Activated CD4-positive, alpha-beta memory T cell treated with anti-CD3 and anti-CD28 coated beads for 36 hours (primary cell): ENCODE measurements at regions of chr11 and their contacts with region 1.

Region 1: GRCh38 chr11:13772223-13773046 is 104.0 kb downstream of the FAR1 start:
- DNase-seq: no peak
- H3K4me3 Mint-ChIP-seq: no peak overlapping the region
- H3K27ac Mint-ChIP-seq: no peak overlapping the region
- H3K4me1 Mint-ChIP-seq: peaks cover 4% of the 10 kb centered on the region
- H3K27me3 Mint-ChIP-seq: no peaks in the 10 kb centered on the region

Region 2: DNA sequence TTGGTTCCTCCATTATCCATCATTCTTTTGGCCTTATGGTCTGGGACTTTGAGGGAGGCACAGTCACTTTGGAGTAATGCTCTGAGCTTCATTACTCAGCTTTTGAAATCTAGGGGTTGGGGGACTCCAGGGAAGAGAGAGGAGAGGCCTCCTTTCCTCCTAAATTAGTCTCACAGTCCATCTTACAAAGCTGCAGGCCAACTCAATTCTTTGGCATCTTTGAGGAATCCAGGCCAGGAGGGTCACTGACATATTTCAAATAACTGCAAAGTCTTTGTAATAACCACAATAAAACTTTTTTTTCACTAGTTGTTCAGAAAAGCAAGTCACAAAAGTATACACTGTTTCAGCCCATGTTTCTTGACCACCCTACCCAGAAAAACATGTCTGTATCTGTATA is 177.3 kb before region 1 on chr11:
- CTCF ChIA-PET with region 1: no interaction called
- POLR2A ChIA-PET with region 1: no interaction called
- intact Hi-C with region 1: no loop called
- DNase-seq: no peak
- H3K4me3 Mint-ChIP-seq: no peak overlapping the region
- H3K27ac Mint-ChIP-seq: no peak overlapping the region
- H3K4me1 Mint-ChIP-seq: no peaks in the 10 kb centered on the region
- H3K27me3 Mint-ChIP-seq: peaks cover 2% of the 10 kb centered on the region

Region 3: DNA sequence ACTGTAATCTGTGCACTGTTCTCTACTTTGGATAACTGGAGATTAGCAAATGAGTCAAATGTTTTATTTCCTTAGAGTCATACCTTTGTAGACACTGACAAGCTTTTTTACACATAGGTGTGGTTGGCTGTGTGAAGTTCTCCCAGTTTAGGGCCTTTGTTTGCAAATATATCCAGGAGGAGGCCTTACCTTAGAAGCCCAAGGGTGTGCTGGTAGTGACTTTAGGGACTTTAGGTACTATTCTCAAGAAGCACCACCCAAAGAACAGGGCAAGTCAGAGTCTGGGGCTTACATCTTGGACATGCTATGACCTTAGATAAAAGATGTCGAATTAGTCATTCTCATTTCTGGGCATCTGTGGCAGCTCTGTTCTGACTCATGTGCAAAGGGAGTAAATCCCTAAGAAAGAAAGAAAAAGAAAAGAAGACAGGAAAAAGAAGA is 108.8 kb before region 1 on chr11:
- CTCF ChIA-PET with region 1: no interaction called
- POLR2A ChIA-PET with region 1: no interaction called
- intact Hi-C with region 1: no loop called
- DNase-seq: no peak
- H3K4me3 Mint-ChIP-seq: no peak overlapping the region
- H3K27ac Mint-ChIP-seq: no peak overlapping the region
- H3K4me1 Mint-ChIP-seq: peaks cover 5% of the 10 kb centered on the region
- H3K27me3 Mint-ChIP-seq: peaks cover 3% of the 10 kb centered on the region

Region 4: GRCh38 chr11:13761712-13762111 is 10.7 kb before region 1 on chr11:
- CTCF ChIA-PET with region 1: interaction called, 12 read pairs
- POLR2A ChIA-PET with region 1: no interaction called
- intact Hi-C with region 1: no loop called
- DNase-seq: no peak
- H3K4me3 Mint-ChIP-seq: no peak overlapping the region
- H3K27ac Mint-ChIP-seq: no peak overlapping the region
- H3K4me1 Mint-ChIP-seq: no peaks in the 10 kb centered on the region
- H3K27me3 Mint-ChIP-seq: no peaks in the 10 kb centered on the region

Region 5: GRCh38 chr11:13784855-13785254 is 12.4 kb after region 1 on chr11:
- CTCF ChIA-PET with region 1: interaction called, 13 read pairs
- POLR2A ChIA-PET with region 1: no interaction called
- intact Hi-C with region 1: no loop called
- DNase-seq: no peak
- H3K4me3 Mint-ChIP-seq: no peak overlapping the region
- H3K27ac Mint-ChIP-seq: no peak overlapping the region
- H3K4me1 Mint-ChIP-seq: no peaks in the 10 kb centered on the region
- H3K27me3 Mint-ChIP-seq: no peaks in the 10 kb centered on the region

Region 6: GRCh38 chr11:13942983-13943382 is 170.5 kb after region 1 on chr11:
- CTCF ChIA-PET with region 1: interaction called, 13 read pairs
- POLR2A ChIA-PET with region 1: no interaction called
- intact Hi-C with region 1: no loop called
- DNase-seq: no peak
- H3K4me3 Mint-ChIP-seq: no peak overlapping the region
- H3K27ac Mint-ChIP-seq: no peak overlapping the region
- H3K4me1 Mint-ChIP-seq: peaks cover 46% of the 10 kb centered on the region
- H3K27me3 Mint-ChIP-seq: no peaks in the 10 kb centered on the region

Region 7: DNA sequence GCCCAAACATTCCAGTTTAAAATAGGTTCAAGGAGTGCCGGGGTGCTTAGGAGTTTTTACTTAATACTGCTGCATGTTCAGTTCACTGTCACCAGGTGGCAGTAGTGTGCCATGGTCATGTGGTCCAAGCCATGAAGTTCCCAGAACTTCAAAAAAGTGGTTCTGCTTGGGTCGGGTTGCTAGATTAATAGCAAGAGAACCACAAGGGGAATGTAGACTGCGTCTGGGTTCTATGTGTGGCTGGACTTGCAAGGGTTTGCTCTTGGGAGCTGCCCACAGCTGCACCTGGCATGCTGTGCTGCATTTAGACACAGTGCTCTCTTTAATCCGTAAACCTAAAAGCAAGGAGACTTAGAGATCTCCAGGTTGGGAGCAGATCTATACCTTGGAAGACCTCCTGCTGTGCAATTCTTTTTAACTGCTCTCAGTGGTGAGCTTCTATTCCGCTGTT is 183.6 kb after region 1 on chr11:
- CTCF ChIA-PET with region 1: interaction called, 26 read pairs
- POLR2A ChIA-PET with region 1: no interaction called
- intact Hi-C with region 1: loop called (anchors 2 kb)
- DNase-seq: peak; percentile 54
- H3K4me3 Mint-ChIP-seq: no peak overlapping the region
- H3K27ac Mint-ChIP-seq: no peak overlapping the region
- H3K4me1 Mint-ChIP-seq: no peaks in the 10 kb centered on the region
- H3K27me3 Mint-ChIP-seq: peaks cover 3% of the 10 kb centered on the region

Region 8: DNA sequence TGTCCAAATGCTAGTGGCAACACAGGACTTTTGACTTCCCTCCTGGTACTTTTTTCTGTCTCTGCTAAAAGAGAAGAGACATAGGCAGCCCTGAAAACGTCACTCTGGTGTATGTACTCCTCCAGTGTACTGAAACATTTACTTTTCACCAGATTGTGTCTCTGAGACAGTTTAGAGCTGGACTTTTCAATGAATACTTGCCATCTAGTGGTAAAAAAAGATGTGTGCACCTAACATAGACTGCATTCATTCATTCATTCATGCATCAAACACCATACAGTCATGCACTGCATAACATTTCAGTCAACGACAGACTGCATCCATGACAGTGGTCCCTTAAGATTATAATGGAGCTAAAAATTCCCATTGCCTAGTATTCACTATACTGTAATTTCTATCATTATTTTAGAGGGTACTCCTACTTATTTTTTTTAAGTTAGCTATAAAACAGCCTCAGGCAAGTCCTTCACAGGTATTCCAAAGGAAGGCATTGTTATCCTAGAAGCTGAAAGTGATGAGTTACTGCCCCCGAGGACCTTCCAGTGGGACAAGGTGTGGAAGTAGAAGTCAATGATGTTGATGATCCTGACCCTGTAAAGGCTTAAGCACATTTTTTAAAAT is 376.3 kb after region 1 on chr11:
- CTCF ChIA-PET with region 1: interaction called, 30 read pairs
- POLR2A ChIA-PET with region 1: no interaction called
- intact Hi-C with region 1: loop called (anchors 1 kb)
- DNase-seq: no peak
- H3K4me3 Mint-ChIP-seq: no peak overlapping the region
- H3K27ac Mint-ChIP-seq: no peak overlapping the region
- H3K4me1 Mint-ChIP-seq: peaks cover 8% of the 10 kb centered on the region
- H3K27me3 Mint-ChIP-seq: no peaks in the 10 kb centered on the region

Region 9: GRCh38 chr11:14249121-14249963 is 476.9 kb after region 1 on chr11:
- CTCF ChIA-PET with region 1: interaction called, 34 read pairs
- POLR2A ChIA-PET with region 1: no interaction called
- intact Hi-C with region 1: loop called (anchors 1 kb)
- DNase-seq: peak; percentile 78
- H3K4me3 Mint-ChIP-seq: no peak overlapping the region
- H3K27ac Mint-ChIP-seq: no peak overlapping the region
- H3K4me1 Mint-ChIP-seq: peaks cover 19% of the 10 kb centered on the region
- H3K27me3 Mint-ChIP-seq: no peaks in the 10 kb centered on the region